A673 (cell line): ENCODE measurements at regions of chr11 and their contacts with region 1.

Region 1: GRCh38 chr11:760236-760635 is 13.0 kb downstream of the TALDO1 start:
- DNase-seq: no peak
- H3K4me3 ChIP-seq: no peak overlapping the region
- H3K27ac ChIP-seq: no peak overlapping the region
- H3K4me1 ChIP-seq: no peaks in the 10 kb centered on the region
- H3K27me3 ChIP-seq: no peaks in the 10 kb centered on the region
- CTCF ChIP-seq: no peak

Region 2: GRCh38 chr11:737371-737770 is 22.9 kb before region 1 on chr11:
- CTCF ChIA-PET with region 1: interaction called, 12 read pairs
- POLR2A ChIA-PET with region 1: no interaction called
- intact Hi-C with region 1: no loop called
- DNase-seq: no peak
- H3K4me3 ChIP-seq: no peak overlapping the region
- H3K27ac ChIP-seq: no peak overlapping the region
- H3K4me1 ChIP-seq: no peaks in the 10 kb centered on the region
- H3K27me3 ChIP-seq: no peaks in the 10 kb centered on the region
- CTCF ChIP-seq: no peak